Vagina (tissue), 2 donors: ENCODE measurements at regions of chr4 and their contacts with region 1.

Region 1: GRCh38 chr4:128287871-128288688 is 467 bp upstream of the PGRMC2 start:
- DNase-seq: peak; percentile 98 to 99
- H3K4me3 ChIP-seq: peak overlapping the region; percentile 87 to 91
- H3K27ac ChIP-seq: peak overlapping the region; percentile 95
- H3K4me1 ChIP-seq: peaks cover 29% of the 10 kb centered on the region
- H3K27me3 ChIP-seq: no peaks in the 10 kb centered on the region
- CTCF ChIP-seq: peak in 1 of 3 experiments; percentile 31
- POLR2A ChIP-seq: peak in 1 of 2 donors; percentile 60

Region 2: DNA sequence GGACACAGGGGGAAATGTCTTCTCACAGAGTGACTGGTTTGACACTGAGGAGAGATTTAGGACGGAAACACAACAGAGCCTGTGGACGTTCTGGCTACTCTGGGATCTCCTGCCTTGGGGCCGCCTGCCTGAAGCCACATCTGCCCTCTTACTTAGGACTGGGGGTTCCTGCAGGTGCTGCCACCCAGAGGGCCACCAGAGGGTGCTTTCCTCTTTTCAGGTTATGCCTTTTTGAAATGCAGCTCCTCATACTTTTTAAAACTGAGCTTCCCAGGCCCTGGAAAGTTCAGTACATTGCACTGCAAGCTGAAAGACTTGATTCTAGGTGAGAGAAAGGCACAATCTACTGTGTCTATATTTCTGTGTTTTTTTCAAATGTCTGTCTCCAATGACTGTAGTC is 91.8 kb after region 1 on chr4:
- intact Hi-C with region 1: loop called (anchors 10 kb)
- DNase-seq: no peak
- H3K4me3 ChIP-seq: no peak overlapping the region
- H3K27ac ChIP-seq: no peak overlapping the region
- H3K4me1 ChIP-seq: peaks cover 20% of the 10 kb centered on the region
- H3K27me3 ChIP-seq: no peaks in the 10 kb centered on the region
- CTCF ChIP-seq: peak in 1 of 3 experiments; percentile 37
- POLR2A ChIP-seq: no peak

Region 3: DNA sequence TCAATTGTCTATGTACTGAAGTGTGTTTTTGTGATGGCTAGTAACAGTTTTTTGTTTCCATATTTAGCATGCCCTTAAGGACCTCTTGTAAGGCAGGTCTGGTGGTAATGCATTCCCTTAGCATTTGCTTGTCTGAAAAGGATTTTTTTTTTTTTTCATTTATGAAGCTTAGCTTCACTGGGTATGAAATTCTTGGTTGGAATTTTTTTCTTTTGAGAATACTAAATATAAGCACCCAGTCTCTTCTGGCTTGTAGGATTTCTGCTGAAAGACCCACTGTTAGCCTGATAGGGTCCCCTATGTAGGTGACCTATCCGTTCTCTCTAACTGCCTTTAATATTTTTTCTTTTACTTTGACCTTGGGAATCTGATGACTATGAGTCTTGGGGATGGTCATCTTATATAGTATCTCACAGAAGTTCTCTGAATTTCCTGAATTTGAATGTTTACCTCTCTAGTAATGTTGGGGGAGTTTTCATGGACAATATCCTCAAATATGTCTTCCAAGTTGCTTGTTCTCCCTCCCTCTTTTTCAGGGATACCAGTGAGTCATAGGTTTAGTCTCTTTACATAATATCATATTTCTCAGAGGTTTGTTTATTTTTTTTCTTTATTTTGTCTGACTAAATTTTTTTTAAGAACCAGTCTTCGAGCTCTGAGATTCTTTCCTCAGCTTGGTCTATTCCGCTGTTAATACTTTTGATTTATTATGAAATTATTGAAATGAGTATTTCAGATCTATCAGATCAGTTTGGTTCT is 156.6 kb after region 1 on chr4:
- intact Hi-C with region 1: no loop called
- DNase-seq: no peak
- H3K4me3 ChIP-seq: no peak overlapping the region
- H3K27ac ChIP-seq: no peak overlapping the region
- H3K4me1 ChIP-seq: no peaks in the 10 kb centered on the region
- H3K27me3 ChIP-seq: no peaks in the 10 kb centered on the region
- CTCF ChIP-seq: no peak
- POLR2A ChIP-seq: no peak

Region 4: GRCh38 chr4:128809477-128810330 is 521.6 kb after region 1 on chr4 and contains the start of gene JADE1:
- intact Hi-C with region 1: loop called (anchors 5 kb)
- DNase-seq: peak in 1 of 2 donors; percentile 91
- H3K4me3 ChIP-seq: peak within 1 kb of the TSS; percentile 58 to 80
- H3K27ac ChIP-seq: peak within 1 kb of the TSS; percentile 89
- H3K4me1 ChIP-seq: peaks cover 20% of the 10 kb centered on the region
- H3K27me3 ChIP-seq: no peaks in the 10 kb centered on the region
- CTCF ChIP-seq: peak in 2 of 3 experiments; percentile 9 to 52
- POLR2A ChIP-seq: peak in 1 of 2 donors; percentile 55
- total RNA-seq, gene JADE1: 29.0 TPM

Region 5: GRCh38 chr4:130210864-130211263 is 1922.8 kb after region 1 on chr4:
- intact Hi-C with region 1: no loop called
- DNase-seq: no peak
- H3K4me3 ChIP-seq: no peak overlapping the region
- H3K27ac ChIP-seq: no peak overlapping the region
- H3K4me1 ChIP-seq: no peaks in the 10 kb centered on the region
- H3K27me3 ChIP-seq: no peaks in the 10 kb centered on the region
- CTCF ChIP-seq: no peak
- POLR2A ChIP-seq: no peak